ENCODE measurements at regions of chr14 and their contacts with region 1.

Region 1: GRCh38 chr14:23294734-23295561 is 7.7 kb downstream of the PPP1R3E start:
- DNase-seq: peak in 1 of 2 experiments; percentile 56
- H3K4me3 ChIP-seq: no peak overlapping the region
- H3K27ac ChIP-seq: no peak overlapping the region
- H3K4me1 ChIP-seq: no peaks in the 10 kb centered on the region; a peak in 3 of 7 replicates
- H3K27me3 ChIP-seq: peaks cover 42 to 80% (median 73%) of the 10 kb centered on the region in 4 experiments
- CTCF ChIP-seq: peak; percentile 64 to 80 (median 66)
- EP300 ChIP-seq: 0 out of 3 replicates have a peak, but pooled peaks of 1 of the 2 experiments have one; percentile 12
- POLR2A ChIP-seq: no peak
- RAD21 ChIP-seq: peak; percentile 32 to 55; a peak in 2 of 4 replicates

Region 2: DNA sequence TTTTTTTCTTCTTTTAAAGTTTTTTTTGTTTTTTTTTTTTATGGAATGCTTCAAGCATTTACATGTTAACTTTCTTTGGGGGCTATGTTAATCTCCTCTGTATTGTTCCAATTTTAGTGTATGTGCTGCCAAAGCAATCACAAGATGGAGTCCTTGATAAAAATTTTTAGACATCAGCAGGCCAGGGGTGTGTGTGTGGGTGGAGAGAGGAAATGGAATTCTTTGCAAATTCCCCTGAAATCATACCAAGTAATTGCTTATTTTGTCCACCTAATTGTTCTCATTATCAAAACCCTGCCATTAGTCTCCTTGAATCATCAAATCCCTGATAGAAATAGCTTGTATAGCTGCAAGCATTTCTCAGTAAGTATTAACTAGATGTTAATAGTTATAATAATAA is 35.5 kb before region 1 on chr14:
- CTCF ChIA-PET with region 1: interaction called, 34 read pairs
- POLR2A ChIA-PET with region 1: no interaction called
- DNase-seq: no peak
- H3K4me3 ChIP-seq: no peak overlapping the region
- H3K27ac ChIP-seq: no peak overlapping the region
- H3K4me1 ChIP-seq: peaks cover 0 to 6% (median 0%) of the 10 kb centered on the region in 4 experiments; a peak in 1 of 7 replicates
- H3K27me3 ChIP-seq: no peaks in the 10 kb centered on the region
- CTCF ChIP-seq: no peak
- EP300 ChIP-seq: no peak
- POLR2A ChIP-seq: no peak
- RAD21 ChIP-seq: no peak

Region 3: DNA sequence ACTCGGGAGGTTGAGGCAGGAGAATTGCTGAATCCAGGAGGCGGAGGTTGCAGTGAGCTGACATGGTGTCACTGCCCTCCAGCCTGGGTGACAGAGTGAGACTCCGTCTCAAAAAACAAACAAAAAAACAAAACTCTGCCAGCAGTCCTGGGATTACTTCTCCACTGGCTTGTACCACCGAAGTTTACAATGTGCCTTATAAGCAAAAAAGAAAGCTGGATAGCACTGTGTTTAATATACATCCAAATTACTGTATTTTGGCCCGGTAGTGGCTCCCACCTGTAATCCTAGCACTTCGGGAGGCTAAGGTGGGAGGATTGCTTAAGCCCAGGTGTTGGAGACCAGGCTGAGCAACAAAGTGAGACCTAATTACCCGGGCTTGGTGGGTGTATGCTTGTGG is 25.8 kb before region 1 on chr14:
- CTCF ChIA-PET with region 1: interaction called, 42 read pairs
- POLR2A ChIA-PET with region 1: no interaction called
- DNase-seq: no peak
- H3K4me3 ChIP-seq: no peak overlapping the region
- H3K27ac ChIP-seq: no peak overlapping the region
- H3K4me1 ChIP-seq: no peaks in the 10 kb centered on the region
- H3K27me3 ChIP-seq: peaks cover 1 to 21% (median 4%) of the 10 kb centered on the region in 4 experiments; a peak in 4 of 7 replicates
- CTCF ChIP-seq: no peak
- EP300 ChIP-seq: no peak
- POLR2A ChIP-seq: no peak
- RAD21 ChIP-seq: no peak

Region 4: GRCh38 chr14:23275412-23275811 is 19.5 kb before region 1 on chr14:
- CTCF ChIA-PET with region 1: interaction called, 42 read pairs
- POLR2A ChIA-PET with region 1: no interaction called
- DNase-seq: no peak
- H3K4me3 ChIP-seq: no peak overlapping the region
- H3K27ac ChIP-seq: no peak overlapping the region
- H3K4me1 ChIP-seq: peaks cover 2 to 7% (median 5%) of the 10 kb centered on the region in 4 experiments; a peak in 4 of 7 replicates
- H3K27me3 ChIP-seq: peaks cover 0 to 16% (median 8%) of the 10 kb centered on the region in 4 experiments; a peak in 5 of 7 replicates
- CTCF ChIP-seq: no peak
- EP300 ChIP-seq: no peak
- POLR2A ChIP-seq: no peak
- RAD21 ChIP-seq: no peak

Region 5: DNA sequence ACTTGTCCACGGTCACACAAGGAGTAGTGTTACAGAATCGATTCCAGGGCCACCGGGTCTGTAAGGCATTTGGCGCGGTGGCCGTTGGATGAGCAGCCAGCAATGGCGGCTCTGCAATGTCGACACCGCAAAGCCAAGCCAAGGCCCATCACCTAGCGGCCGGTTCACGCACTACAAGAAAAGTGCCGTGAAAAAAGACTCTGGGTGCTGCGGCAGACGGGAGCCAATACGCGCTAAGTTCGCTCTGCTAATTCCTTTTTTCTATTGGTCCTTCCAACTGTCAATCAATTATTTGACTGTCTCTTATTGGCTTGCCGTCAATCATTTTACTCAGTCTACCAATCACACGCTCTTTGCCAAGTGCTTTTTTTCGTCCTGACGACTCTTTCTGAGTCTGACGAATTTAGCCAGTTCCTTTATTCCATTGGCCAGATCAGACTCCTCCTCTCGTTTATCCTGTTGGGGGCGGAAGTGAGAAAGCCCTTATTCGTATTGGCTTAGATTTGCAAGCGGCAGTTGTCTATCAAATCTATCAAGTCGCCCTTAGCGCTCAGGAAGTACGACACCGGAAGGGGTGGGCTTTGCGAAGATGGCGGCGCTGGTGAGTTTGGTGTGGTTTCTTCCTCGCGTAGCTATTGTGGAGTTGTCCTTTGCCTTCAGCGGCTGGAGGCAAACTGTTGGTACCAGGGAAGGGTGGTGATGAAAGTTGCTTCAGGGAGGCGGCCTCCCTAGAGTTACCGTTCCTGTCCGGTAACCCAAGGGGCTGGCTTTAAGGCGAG is 174.4 kb after region 1 on chr14 and contains the start of gene NGDN:
- CTCF ChIA-PET with region 1: no interaction called
- POLR2A ChIA-PET with region 1: no interaction called
- DNase-seq: peak; percentile 94 to 96
- H3K4me3 ChIP-seq: peak within 1 kb of the TSS; percentile 89 to 97 (median 96)
- H3K27ac ChIP-seq: peak within 1 kb of the TSS; percentile 79
- H3K4me1 ChIP-seq: peaks cover 0 to 3% (median 0%) of the 10 kb centered on the region in 4 experiments; a peak in 1 of 7 replicates
- H3K27me3 ChIP-seq: no peaks in the 10 kb centered on the region
- CTCF ChIP-seq: peak; percentile 74 to 85 (median 80)
- EP300 ChIP-seq: no peak
- POLR2A ChIP-seq: peak; percentile 79 to 85
- RAD21 ChIP-seq: peak; percentile 65 to 68
- total RNA-seq, gene NGDN: 48.8 and 56.0 TPM in 2 replicates